Prostate gland (tissue), 2 donors: ENCODE measurements at regions of chr12 and their contacts with region 1.

Region 1: GRCh38 chr12:124457287-124458219 is 109.9 kb downstream of the NCOR2 start:
- DNase-seq: peak; percentile 46
- H3K4me3 ChIP-seq: peak overlapping the region in 1 of 2 donors; percentile 6
- H3K27ac ChIP-seq: peak overlapping the region; percentile 61 to 73
- H3K4me1 ChIP-seq: peaks cover 16% of the 10 kb centered on the region
- H3K27me3 ChIP-seq: no peaks in the 10 kb centered on the region
- CTCF ChIP-seq: no peak
- POLR2A ChIP-seq: no peak

Region 2: DNA sequence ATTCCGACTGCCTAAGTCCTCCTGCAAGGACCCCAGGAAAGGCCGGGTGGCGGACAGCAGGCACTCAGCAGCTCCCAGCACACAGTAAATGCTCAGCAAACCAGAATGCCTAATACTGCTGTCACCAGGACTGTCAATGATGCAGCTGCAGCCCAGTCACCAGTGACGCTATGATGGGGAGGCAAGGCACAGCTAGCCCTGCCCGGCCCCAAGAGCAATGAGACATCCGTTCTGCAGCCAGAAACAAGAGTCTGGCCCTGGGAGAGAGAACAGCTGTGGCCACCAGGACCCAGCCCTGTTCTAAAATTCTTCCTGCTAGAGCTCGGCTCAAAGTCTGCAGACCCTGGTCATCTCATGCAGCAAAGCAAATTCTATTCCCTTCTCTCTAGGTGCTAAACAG is 40.1 kb after region 1 on chr12:
- intact Hi-C with region 1: loop called (anchors 5 kb)
- DNase-seq: no peak
- H3K4me3 ChIP-seq: no peak overlapping the region
- H3K27ac ChIP-seq: peak overlapping the region; percentile 52 to 66
- H3K4me1 ChIP-seq: peaks cover 31% of the 10 kb centered on the region
- H3K27me3 ChIP-seq: no peaks in the 10 kb centered on the region
- CTCF ChIP-seq: no peak
- POLR2A ChIP-seq: no peak